PC-9 (cell line): ENCODE measurements at regions of chr10 and their contacts with region 1.

Region 1: GRCh38 chr10:48623607-48624132 is 18.8 kb upstream of the ARHGAP22 start:
- DNase-seq: no peak
- H3K4me3 ChIP-seq: no peak overlapping the region
- H3K27ac ChIP-seq: no peak overlapping the region
- H3K4me1 ChIP-seq: no peaks in the 10 kb centered on the region
- H3K27me3 ChIP-seq: no peaks in the 10 kb centered on the region
- CTCF ChIP-seq: no peak

Region 2: GRCh38 chr10:48306265-48306869 is 317.3 kb before region 1 on chr10 and contains the start of gene MAPK8:
- CTCF ChIA-PET with region 1: interaction called, 23 read pairs
- POLR2A ChIA-PET with region 1: no interaction called
- intact Hi-C with region 1: no loop called
- DNase-seq: peak; percentile 77 to 96
- H3K4me3 ChIP-seq: peak within 1 kb of the TSS; percentile 85
- H3K27ac ChIP-seq: peak within 1 kb of the TSS; percentile 14; the same call in 1 of the 2 replicates
- H3K4me1 ChIP-seq: peaks cover 45% of the 10 kb centered on the region
- H3K27me3 ChIP-seq: no peaks in the 10 kb centered on the region
- CTCF ChIP-seq: no peak
- total RNA-seq, gene MAPK8: 67.5 and 72.1 TPM in 2 replicates

Region 3: GRCh38 chr10:48343921-48344598 is 279.6 kb before region 1 on chr10:
- CTCF ChIA-PET with region 1: no interaction called
- POLR2A ChIA-PET with region 1: no interaction called
- intact Hi-C with region 1: no loop called
- DNase-seq: no peak
- H3K4me3 ChIP-seq: no peak overlapping the region
- H3K27ac ChIP-seq: no peak overlapping the region
- H3K4me1 ChIP-seq: no peaks in the 10 kb centered on the region
- H3K27me3 ChIP-seq: no peaks in the 10 kb centered on the region
- CTCF ChIP-seq: no peak

Region 4: GRCh38 chr10:48608279-48608681 is 15.4 kb before region 1 on chr10:
- CTCF ChIA-PET with region 1: no interaction called
- POLR2A ChIA-PET with region 1: no interaction called
- intact Hi-C with region 1: loop called (anchors 2 kb)
- DNase-seq: peak in 1 of 2 experiments; percentile 44
- H3K4me3 ChIP-seq: no peak overlapping the region
- H3K27ac ChIP-seq: no peak overlapping the region
- H3K4me1 ChIP-seq: peaks cover 49% of the 10 kb centered on the region
- H3K27me3 ChIP-seq: no peaks in the 10 kb centered on the region
- CTCF ChIP-seq: peak; percentile 82